ENCODE measurements at regions of chr2 and their contacts with region 1.

Region 1: GRCh38 chr2:211084352-211084751 is 528.0 kb downstream of the CPS1 start:
- DNase-seq: no peak
- H3K4me3 ChIP-seq: no peak overlapping the region
- CTCF ChIP-seq: no peak

Region 2: DNA sequence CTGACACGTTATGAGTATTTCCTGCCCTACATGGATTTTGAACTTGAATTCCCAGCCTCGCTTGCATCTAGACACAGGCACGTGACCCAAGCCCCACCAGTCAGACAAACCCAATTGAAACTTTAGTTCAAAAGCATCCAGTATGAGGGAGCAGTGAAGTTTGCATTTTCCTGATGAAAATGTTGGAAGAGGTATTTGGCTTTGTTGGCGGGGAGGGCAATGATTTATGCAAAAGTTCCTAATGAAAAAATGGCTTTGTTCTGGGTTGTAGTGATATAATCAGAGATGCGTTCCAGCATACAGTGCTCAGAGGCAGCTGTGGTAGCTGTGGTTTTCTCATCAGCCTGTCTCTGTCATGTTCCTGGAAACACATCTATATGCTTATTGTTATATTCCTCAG is 564.8 kb before region 1 on chr2:
- in situ Hi-C with region 1: no loop called
- DNase-seq: no peak
- H3K4me3 ChIP-seq: no peak overlapping the region
- CTCF ChIP-seq: no peak

Region 3: DNA sequence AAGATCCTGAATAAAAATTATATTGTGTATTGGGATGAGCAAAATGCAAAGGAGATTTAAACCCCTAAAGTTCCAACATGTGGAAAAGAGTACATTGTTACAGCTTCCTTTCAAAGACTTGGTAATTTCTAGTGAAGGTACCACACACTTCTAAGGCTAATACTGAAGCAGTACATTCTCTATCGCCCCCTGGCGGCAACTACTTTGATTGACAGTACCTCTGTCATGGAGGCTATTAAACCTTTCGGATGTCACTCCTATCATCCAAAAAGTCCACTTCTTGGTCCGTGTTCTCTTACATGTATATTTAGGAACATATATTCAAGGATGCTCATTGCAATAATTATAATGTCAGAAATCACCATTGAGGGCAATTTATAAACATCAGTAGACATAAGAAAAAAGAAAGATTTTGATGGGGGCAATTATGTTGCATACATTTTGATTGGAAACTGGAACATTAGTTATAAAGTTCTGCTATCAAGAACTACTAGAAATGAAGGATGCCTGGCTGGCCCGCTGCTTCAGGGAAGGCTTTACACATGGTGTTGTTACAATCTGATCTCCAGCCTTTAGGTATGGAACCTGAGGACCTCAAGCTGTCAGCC is 73.6 kb after region 1 on chr2:
- in situ Hi-C with region 1: loop called (anchors 5 kb)
- DNase-seq: peak; percentile 62
- H3K4me3 ChIP-seq: no peak overlapping the region
- CTCF ChIP-seq: peak; percentile 85